ENCODE measurements at regions of chr10 and their contacts with region 1.

Region 1: GRCh38 chr10:58384999-58385783 is at the start of gene TFAM:
- DNase-seq: peak; percentile 97
- ATAC-seq: peak; percentile 99
- total RNA-seq, gene TFAM: 32.0 TPM

Region 2: GRCh38 chr10:57948796-57949195 is 436.4 kb before region 1 on chr10:
- intact Hi-C with region 1: no loop called
- DNase-seq: no peak
- ATAC-seq: no peak

Region 3: GRCh38 chr10:58177362-58177947 is 207.7 kb before region 1 on chr10:
- intact Hi-C with region 1: loop called (anchors 10 kb)
- DNase-seq: no peak
- ATAC-seq: no peak

Region 4: GRCh38 chr10:58268870-58269605 is 116.2 kb before region 1 on chr10 and contains the start of gene CISD1:
- intact Hi-C with region 1: loop called (anchors 1 kb)
- DNase-seq: peak; percentile 99
- ATAC-seq: peak; percentile 94
- total RNA-seq, gene CISD1: 176 TPM

Region 5: GRCh38 chr10:58299580-58299979 is 85.6 kb before region 1 on chr10:
- intact Hi-C with region 1: loop called (anchors 2 kb)
- DNase-seq: no peak
- ATAC-seq: peak; percentile 63

Region 6: GRCh38 chr10:58334817-58335305 is 50.3 kb before region 1 on chr10 and contains the start of gene UBE2D1:
- intact Hi-C with region 1: loop called (anchors 2 kb)
- DNase-seq: peak; percentile 96
- ATAC-seq: peak; percentile 96
- total RNA-seq, gene UBE2D1: 55.3 TPM

Region 7: GRCh38 chr10:58350619-58351323 is 34.4 kb before region 1 on chr10:
- intact Hi-C with region 1: no loop called
- DNase-seq: no peak
- ATAC-seq: no peak

Measured in Right ventricle myocardium inferior (tissue), 1 donor.